K562 (cell line): ENCODE measurements at regions of chr3 and their contacts with region 1.

Region 1: GRCh38 chr3:12601072-12601471 is 44.2 kb downstream of the MKRN2 start:
- DNase-seq: peak in 2 of 4 experiments; percentile 56 to 61
- ATAC-seq: no peak
- H3K4me3 ChIP-seq: no peak overlapping the region
- H3K27ac ChIP-seq: no peak overlapping the region
- H3K4me1 ChIP-seq: no peaks in the 10 kb centered on the region
- H3K27me3 ChIP-seq: no peaks in the 10 kb centered on the region
- CTCF ChIP-seq: peak in 2 of 3 experiments; percentile 1 to 25; a peak in 2 of 6 replicates
- EP300 ChIP-seq: no peak
- POLR2A ChIP-seq: no peak
- RAD21 ChIP-seq: peak in 1 of 2 experiments; percentile 23; a peak in 1 of 4 replicates

Region 2: GRCh38 chr3:12462159-12462947 is 138.7 kb before region 1 on chr3:
- CTCF ChIA-PET with region 1: no interaction called
- POLR2A ChIA-PET with region 1: no interaction called
- in situ Hi-C with region 1: no loop called
- intact Hi-C with region 1: no loop called
- DNase-seq: no peak
- ATAC-seq: peak; percentile 25; the same call in 2 of the 3 replicates
- H3K4me3 ChIP-seq: no peak overlapping the region
- H3K27ac ChIP-seq: no peak overlapping the region
- H3K4me1 ChIP-seq: 0 out of 5 replicates have a peak, but pooled peaks cover 0 to 3% of the 10 kb centered on the region in 2 experiments
- H3K27me3 ChIP-seq: peaks cover 57 to 79% of the 10 kb centered on the region in 2 experiments
- CTCF ChIP-seq: no peak
- EP300 ChIP-seq: no peak
- POLR2A ChIP-seq: no peak
- RAD21 ChIP-seq: no peak

Region 3: DNA sequence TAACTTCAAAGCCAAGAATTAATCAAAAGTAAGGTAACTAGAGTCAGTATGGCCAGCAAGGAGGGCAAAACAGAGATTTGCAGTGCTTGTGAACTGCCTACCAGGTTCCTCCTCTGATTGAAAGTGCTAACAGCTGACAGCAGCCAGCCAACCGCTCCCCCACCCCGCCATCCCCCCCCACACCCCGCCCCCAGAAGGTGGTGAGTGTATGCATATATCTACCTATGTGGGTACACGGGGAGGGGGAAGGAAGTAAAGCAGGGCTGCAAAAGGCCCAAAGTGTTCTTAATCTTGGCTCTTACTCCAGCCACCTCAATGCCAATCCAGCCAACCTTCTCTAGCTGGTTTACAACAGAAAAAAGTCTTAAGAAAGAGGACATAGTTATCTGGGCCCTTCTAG is 12.2 kb after region 1 on chr3:
- CTCF ChIA-PET with region 1: no interaction called
- POLR2A ChIA-PET with region 1: interaction called, 11 read pairs
- in situ Hi-C with region 1: no loop called
- intact Hi-C with region 1: no loop called
- DNase-seq: no peak
- ATAC-seq: peak; percentile 38; the same call in 2 of the 3 replicates
- H3K4me3 ChIP-seq: no peak overlapping the region
- H3K27ac ChIP-seq: no peak overlapping the region
- H3K4me1 ChIP-seq: no peaks in the 10 kb centered on the region
- H3K27me3 ChIP-seq: no peaks in the 10 kb centered on the region
- CTCF ChIP-seq: no peak
- EP300 ChIP-seq: no peak
- POLR2A ChIP-seq: no peak
- RAD21 ChIP-seq: no peak